Left colon (tissue), 2 donors: ENCODE measurements at regions of chr1 and their contacts with region 1.

Region 1: DNA sequence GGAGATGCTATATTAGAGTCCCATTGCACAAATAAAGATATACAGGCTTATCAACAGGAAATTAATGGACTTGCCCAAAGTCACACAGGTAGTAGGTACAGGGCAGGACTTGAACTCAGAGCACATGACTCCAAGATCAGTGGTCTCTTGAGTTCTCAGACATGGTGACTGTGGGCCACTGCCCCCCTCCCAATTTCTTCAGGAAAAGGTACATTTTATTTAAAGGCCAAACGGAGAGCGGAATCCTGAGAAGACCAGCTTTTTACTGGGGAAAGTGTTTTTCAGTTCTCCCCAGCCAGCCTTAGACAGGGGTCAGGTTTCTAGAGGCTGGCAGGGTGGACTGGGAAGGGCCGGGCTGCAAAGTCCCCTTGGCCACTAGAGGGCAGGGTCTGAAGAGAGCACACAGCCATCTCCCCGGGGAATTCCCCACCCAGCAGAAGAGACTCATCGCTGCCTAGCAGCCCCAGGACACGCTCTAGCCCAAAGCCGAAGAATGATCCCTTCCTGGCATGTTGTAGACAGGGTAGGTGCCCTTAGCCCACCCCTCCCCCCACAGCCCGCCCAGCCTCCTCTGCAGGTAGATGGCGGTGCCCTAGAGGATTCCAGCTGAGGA is 29.7 kb downstream of the ACP6 start:
- DNase-seq: peak; percentile 66 to 80
- ATAC-seq: peak; percentile 97

Region 2: DNA sequence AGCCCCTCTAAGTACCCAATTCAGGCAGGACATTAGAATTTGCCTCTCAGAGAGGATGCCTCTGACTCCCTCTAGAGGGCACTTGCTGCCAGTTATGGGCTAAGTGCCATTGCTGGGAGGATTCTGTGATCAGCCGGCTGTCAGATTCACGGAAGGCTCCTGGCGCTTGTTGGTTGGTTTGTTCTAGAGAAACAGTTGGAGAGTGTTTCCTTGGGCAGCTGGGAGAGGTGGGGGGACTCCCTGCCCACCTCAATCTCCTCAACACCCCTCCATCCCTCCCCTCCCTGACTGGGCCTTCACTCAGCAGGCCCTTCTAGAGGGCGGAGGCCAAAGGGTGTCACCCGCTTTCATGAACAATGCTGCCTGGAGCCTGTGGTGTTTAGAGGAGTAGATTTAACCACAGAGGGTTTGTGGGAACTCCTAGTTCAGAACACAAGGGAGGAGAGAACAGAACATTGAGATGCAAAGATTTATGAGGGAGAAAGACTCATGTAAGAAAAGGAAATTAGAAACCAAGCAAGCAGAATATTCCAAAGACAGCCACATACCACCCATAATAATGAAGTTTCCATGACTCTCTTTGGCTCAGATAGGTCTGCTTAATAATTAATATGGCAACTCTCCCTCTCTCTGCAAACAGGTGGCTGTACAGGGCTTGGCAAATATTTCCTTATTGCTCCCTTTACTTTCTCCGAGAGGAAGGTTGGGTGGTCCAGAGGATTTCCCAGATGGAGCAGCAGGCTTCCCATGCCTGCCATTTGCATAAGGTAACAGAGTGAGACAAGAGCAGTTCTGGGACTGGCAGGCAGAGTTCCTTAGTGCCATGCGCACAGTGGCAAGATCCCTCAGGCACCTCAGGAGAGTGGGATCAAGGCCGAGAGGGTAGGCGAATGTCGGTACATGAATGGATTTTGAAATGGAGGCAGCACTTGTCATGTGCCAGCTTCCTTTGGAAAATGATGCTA is 59.7 kb after region 1 on chr1:
- intact Hi-C with region 1: loop called in 1 of 2 experiments (anchors 2 kb)
- DNase-seq: peak in 1 of 2 donors; percentile 63
- ATAC-seq: peak; percentile 91